ENCODE measurements at regions of chr17 and their contacts with region 1.

Region 1: DNA sequence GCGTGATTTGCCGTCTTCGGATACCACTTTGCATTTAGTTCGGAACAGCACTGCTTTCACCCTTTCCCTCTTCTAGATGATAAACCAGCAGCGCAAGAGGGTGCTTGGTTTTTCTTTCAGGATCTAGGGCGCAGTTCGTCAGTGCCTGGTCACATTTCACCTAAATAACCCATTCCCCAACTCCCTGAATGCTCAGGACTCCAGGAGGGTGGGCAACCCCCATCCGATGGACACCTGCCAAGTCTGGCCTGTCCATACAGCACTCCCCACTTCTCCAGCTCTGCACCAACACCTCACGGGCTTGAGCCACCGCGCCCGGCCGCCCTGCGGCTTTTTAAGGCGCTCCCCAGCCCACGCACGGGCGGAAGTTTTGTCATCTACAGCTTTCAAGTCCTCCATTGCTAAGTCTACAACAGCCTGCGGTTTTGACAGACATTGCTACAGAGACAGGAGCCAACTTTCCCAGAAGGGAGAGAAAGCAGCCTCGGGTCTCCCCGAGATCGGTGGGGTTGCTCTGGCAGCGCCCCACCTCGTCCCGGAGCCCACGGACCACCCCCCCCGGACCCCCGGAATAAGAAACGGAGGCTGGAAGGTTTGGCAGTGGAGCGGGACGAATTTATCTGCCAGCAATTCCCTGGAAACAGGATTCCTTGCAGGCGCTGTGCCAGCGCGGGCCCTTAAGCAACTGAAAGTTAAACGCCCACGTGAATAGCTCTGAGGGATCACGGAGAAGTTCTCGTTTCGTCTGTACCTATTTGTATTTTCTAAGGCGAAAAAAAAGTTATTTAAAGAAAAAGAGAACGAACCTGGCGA is 38.6 kb upstream of the SLFN13 start:
- DNase-seq: peak; percentile 71
- H3K4me3 Mint-ChIP-seq: peak overlapping the region; percentile 92
- H3K27ac Mint-ChIP-seq: peak overlapping the region; percentile 93
- H3K4me1 Mint-ChIP-seq: peaks cover 78% of the 10 kb centered on the region
- H3K27me3 Mint-ChIP-seq: peaks cover 2% of the 10 kb centered on the region

Region 2: GRCh38 chr17:35170968-35171771 is 316.0 kb before region 1 on chr17:
- intact Hi-C with region 1: loop called (anchors 5 kb)
- DNase-seq: peak; percentile 15
- H3K4me3 Mint-ChIP-seq: peak overlapping the region; percentile 5
- H3K27ac Mint-ChIP-seq: no peak overlapping the region
- H3K4me1 Mint-ChIP-seq: peaks cover 35% of the 10 kb centered on the region
- H3K27me3 Mint-ChIP-seq: peaks cover 7% of the 10 kb centered on the region

Region 3: GRCh38 chr17:35227546-35227945 is 259.6 kb before region 1 on chr17:
- intact Hi-C with region 1: no loop called
- DNase-seq: no peak
- H3K4me3 Mint-ChIP-seq: no peak overlapping the region
- H3K27ac Mint-ChIP-seq: no peak overlapping the region
- H3K4me1 Mint-ChIP-seq: peaks cover 22% of the 10 kb centered on the region
- H3K27me3 Mint-ChIP-seq: peaks cover 3% of the 10 kb centered on the region

Region 4: GRCh38 chr17:35345926-35346771 is 141.0 kb before region 1 on chr17:
- intact Hi-C with region 1: loop called (anchors 1 kb)
- DNase-seq: peak; percentile 26
- H3K4me3 Mint-ChIP-seq: peak overlapping the region; percentile 91
- H3K27ac Mint-ChIP-seq: peak overlapping the region; percentile 40
- H3K4me1 Mint-ChIP-seq: peaks cover 61% of the 10 kb centered on the region
- H3K27me3 Mint-ChIP-seq: peaks cover 9% of the 10 kb centered on the region

Region 5: GRCh38 chr17:35432176-35433074 is 54.7 kb before region 1 on chr17 and contains the start of gene SLFN12:
- intact Hi-C with region 1: loop called (anchors 1 kb)
- DNase-seq: peak; percentile 36
- H3K4me3 Mint-ChIP-seq: peak within 1 kb of the TSS; percentile 86
- H3K27ac Mint-ChIP-seq: peak within 1 kb of the TSS; percentile 87
- H3K4me1 Mint-ChIP-seq: peaks cover 51% of the 10 kb centered on the region
- H3K27me3 Mint-ChIP-seq: no peaks in the 10 kb centered on the region
- total RNA-seq, gene SLFN12: 6.6 and 8.4 TPM in 2 replicates

Region 6: DNA sequence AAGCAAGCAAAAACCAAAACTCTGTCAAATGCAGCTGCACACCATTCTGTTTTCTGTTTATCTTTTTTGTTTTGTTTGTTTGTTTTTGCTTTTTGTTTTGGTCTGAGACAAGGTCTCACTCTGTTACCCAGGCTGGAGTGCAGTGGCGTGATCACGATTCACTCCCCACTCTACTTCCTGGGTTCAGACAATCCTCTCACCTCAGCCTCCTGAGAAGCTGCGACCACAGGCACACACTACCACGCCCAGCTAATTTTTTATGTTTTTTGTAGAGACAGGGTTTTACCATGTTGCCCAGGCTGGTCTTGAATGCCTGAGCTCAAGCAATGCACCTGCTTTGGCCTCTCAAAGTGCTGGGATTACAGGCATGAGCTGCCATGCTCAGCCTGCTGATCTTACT is 19.3 kb before region 1 on chr17:
- intact Hi-C with region 1: loop called (anchors 2 kb)
- DNase-seq: peak; percentile 40
- H3K4me3 Mint-ChIP-seq: peak overlapping the region; percentile 38
- H3K27ac Mint-ChIP-seq: peak overlapping the region; percentile 55
- H3K4me1 Mint-ChIP-seq: peaks cover 33% of the 10 kb centered on the region
- H3K27me3 Mint-ChIP-seq: no peaks in the 10 kb centered on the region

Region 7: DNA sequence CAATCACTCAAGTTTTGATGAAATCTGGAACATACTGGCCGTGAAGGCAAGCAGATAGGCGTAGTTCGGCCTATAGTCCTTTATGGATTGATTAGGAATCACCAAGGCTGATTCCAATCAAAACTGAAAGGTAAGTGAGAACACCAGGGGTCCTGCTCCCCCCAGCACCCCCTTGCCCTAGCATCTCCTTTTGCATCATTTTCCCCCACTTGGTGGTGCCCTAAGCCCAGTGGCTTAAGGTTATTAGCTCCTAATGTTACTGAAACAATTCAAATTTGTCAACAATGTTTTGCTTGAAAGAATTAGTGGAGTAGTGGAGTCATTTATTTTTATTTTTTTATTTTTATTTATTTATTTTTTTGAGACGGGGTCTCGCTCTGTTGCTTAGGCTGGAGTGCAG is 68.6 kb after region 1 on chr17:
- intact Hi-C with region 1: no loop called
- DNase-seq: no peak
- H3K4me3 Mint-ChIP-seq: no peak overlapping the region
- H3K27ac Mint-ChIP-seq: no peak overlapping the region
- H3K4me1 Mint-ChIP-seq: peaks cover 1% of the 10 kb centered on the region
- H3K27me3 Mint-ChIP-seq: peaks cover 19% of the 10 kb centered on the region

Measured in activated T-helper 1 cell treated with anti-CD3 and anti-CD28 coated beads, Interleukin-12 subunit alpha, Interleukin-12 subunit beta, Interleukin-2, Interleukin-4 antibody, amounts not matched to agents 30 ng/mL and 10 ng/mL and 1 ng/mL, durations not matched to agents 14 hours and 24 hours and 36 hours (primary cell).